Activated CD4-positive, alpha-beta T cell treated with anti-CD3 and anti-CD28 coated beads for 36 hours (primary cell): ENCODE measurements at regions of chr1 and their contacts with region 1.

Region 1: DNA sequence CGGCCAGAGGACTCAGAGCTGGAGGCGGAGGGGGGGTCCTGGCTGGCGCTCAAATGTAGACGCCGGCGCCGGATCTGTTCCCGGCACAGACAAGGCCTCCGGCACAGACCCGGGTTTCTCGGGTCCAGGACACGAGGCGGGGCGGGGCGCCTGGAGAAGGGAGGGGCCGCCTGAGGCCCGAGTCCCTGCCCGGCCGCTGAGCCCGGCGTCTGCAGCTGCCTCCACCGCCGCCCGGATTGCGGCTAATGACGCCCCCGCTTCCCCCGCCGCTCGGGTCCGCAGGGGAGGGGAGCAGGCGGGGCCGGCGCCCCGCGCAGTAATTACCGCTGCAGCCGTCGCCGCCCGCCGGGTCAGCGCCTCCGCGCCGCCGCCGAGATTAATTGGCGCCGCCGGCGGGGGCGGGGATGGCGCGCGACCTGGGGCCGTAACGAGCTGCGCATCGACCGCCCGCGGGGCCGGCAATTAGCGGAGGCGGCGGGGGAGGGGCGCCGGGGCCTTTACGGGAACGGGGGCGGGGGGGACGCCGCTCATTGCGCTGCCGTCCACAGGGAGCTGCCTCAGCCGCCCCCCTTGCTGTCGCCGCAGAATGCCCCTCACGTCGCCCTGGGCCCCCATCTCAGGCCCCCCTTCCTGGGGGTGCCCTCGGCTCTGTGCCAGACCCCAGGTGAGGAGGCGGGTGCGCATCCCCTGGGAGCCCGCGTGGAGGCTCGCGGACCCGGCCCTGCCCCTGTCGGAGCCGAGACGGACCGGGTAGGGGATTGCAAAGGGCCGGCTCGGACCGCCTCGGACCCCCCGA is 17.3 kb downstream of the NOC2L start:
- DNase-seq: peak; percentile 56
- ATAC-seq: peak; percentile 37
- H3K4me3 Mint-ChIP-seq: no peak overlapping the region
- H3K27ac Mint-ChIP-seq: no peak overlapping the region
- H3K4me1 Mint-ChIP-seq: peaks cover 5% of the 10 kb centered on the region
- H3K27me3 Mint-ChIP-seq: peaks cover 14% of the 10 kb centered on the region

Region 2: GRCh38 chr1:921011-921837 is 20.6 kb before region 1 on chr1:
- CTCF ChIA-PET with region 1: no interaction called
- POLR2A ChIA-PET with region 1: no interaction called
- intact Hi-C with region 1: loop called in 1 of 2 experiments (anchors 2 kb)
- DNase-seq: peak; percentile 52
- ATAC-seq: peak; percentile 42
- H3K4me3 Mint-ChIP-seq: no peak overlapping the region
- H3K27ac Mint-ChIP-seq: no peak overlapping the region
- H3K4me1 Mint-ChIP-seq: peaks cover 12% of the 10 kb centered on the region
- H3K27me3 Mint-ChIP-seq: peaks cover 42% of the 10 kb centered on the region